ENCODE measurements at regions of chr7 and their contacts with region 1.

Region 1: DNA sequence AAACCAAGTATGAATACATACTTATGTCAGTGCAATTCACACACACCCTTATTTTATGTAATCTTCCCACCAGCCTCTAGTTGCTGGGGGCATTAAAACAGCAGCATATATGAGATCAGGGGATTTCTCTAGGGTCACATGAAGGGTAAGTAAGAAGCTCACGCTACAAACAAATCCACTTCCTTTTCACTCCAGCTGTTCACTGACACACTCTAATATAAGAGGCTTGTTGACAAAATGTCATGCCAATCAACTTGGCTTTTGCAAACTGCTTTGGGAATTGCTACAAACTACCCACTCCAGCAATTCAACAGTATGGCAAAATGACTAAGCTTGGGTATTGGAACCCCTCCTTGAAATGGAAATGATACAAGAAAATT is 10.3 kb downstream of the FAM3C start:
- H3K4me3 ChIP-seq: no peak overlapping the region
- H3K27ac ChIP-seq: no peak overlapping the region
- H3K4me1 ChIP-seq: no peaks in the 10 kb centered on the region
- CTCF ChIP-seq: no peak

Region 2: GRCh38 chr7:121351679-121352078 is 34.1 kb before region 1 on chr7:
- CTCF ChIA-PET with region 1: no interaction called
- POLR2A ChIA-PET with region 1: no interaction called
- H3K4me3 ChIP-seq: no peak overlapping the region
- H3K27ac ChIP-seq: no peak overlapping the region
- H3K4me1 ChIP-seq: no peaks in the 10 kb centered on the region
- CTCF ChIP-seq: no peak

Region 3: GRCh38 chr7:121395961-121396757 is 10.4 kb after region 1 on chr7 and contains the start of gene FAM3C:
- CTCF ChIA-PET with region 1: interaction called, 26 read pairs
- POLR2A ChIA-PET with region 1: interaction called, 15 read pairs
- H3K4me3 ChIP-seq: peak within 1 kb of the TSS; percentile 83
- H3K27ac ChIP-seq: peak within 1 kb of the TSS; percentile 73
- H3K4me1 ChIP-seq: no peaks in the 10 kb centered on the region
- CTCF ChIP-seq: peak; percentile 75; the same call in 1 of the 2 replicates

Measured in HEK293 (cell line).